ENCODE measurements at regions of chr20 and their contacts with region 1.

Region 1: GRCh38 chr20:10673988-10674711 is at the start of gene JAG1:
- DNase-seq: peak; percentile 95
- H3K4me3 ChIP-seq: peak within 1 kb of the TSS; percentile 59 to 86 (median 74)
- H3K27ac ChIP-seq: peak within 1 kb of the TSS; percentile 86 to 98 (median 96)
- H3K4me1 ChIP-seq: peaks cover 3 to 66% (median 59%) of the 10 kb centered on the region in 6 donors
- H3K27me3 ChIP-seq: peaks cover 0 to 87% (median 19%) of the 10 kb centered on the region in 7 donors
- CTCF ChIP-seq: no peak
- POLR2A ChIP-seq: no peak
- total RNA-seq, gene JAG1: 39.5 to 85.3 (median 67.8) TPM

Region 2: GRCh38 chr20:11216451-11217314 is 542.5 kb after region 1 on chr20:
- intact Hi-C with region 1: loop called (anchors 10 kb)
- DNase-seq: no peak
- H3K4me3 ChIP-seq: no peak overlapping the region
- H3K27ac ChIP-seq: peak overlapping the region in 7 of 8 donors; percentile 25 to 68 (median 61)
- H3K4me1 ChIP-seq: peaks cover 11 to 50% (median 20%) of the 10 kb centered on the region in 6 donors
- H3K27me3 ChIP-seq: no peaks in the 10 kb centered on the region
- CTCF ChIP-seq: no peak
- POLR2A ChIP-seq: no peak

Measured in spleen (tissue), 13 donors.